ENCODE measurements at regions of chr9 and their contacts with region 1.

Region 1: GRCh38 chr9:133347985-133348717 is at the starts of genes MED22 and RPL7A:
- DNase-seq: peak; percentile 87 to 97
- ATAC-seq: peak; percentile 90 to 96 (median 93)
- H3K4me3 ChIP-seq: peak within 1 kb of the TSS; percentile 76
- H3K4me3 Mint-ChIP-seq: peak within 1 kb of the TSS; percentile 100
- H3K27ac ChIP-seq: peak within 1 kb of the TSS; percentile 75
- H3K27ac Mint-ChIP-seq: peak within 1 kb of the TSS; percentile 94 to 95
- H3K4me1 ChIP-seq: peaks cover 35% of the 10 kb centered on the region
- H3K4me1 Mint-ChIP-seq: peaks cover 42 to 44% of the 10 kb centered on the region in 2 donors
- H3K27me3 ChIP-seq: no peaks in the 10 kb centered on the region
- H3K27me3 Mint-ChIP-seq: no peaks in the 10 kb centered on the region
- CTCF ChIP-seq: no peak
- total RNA-seq, gene MED22: 23.8 to 37.0 (median 28.1) TPM
- total RNA-seq, gene RPL7A: 1,409 to 1,616 (median 1,600) TPM

Region 2: GRCh38 chr9:133335878-133336811 is 12.0 kb before region 1 on chr9 and contains the start of gene SURF6:
- intact Hi-C with region 1: loop called (anchors 1 kb)
- DNase-seq: peak; percentile 93 to 97
- ATAC-seq: peak; percentile 90 to 97 (median 92)
- H3K4me3 ChIP-seq: peak within 1 kb of the TSS; percentile 95
- H3K4me3 Mint-ChIP-seq: peak within 1 kb of the TSS; percentile 95
- H3K27ac ChIP-seq: peak within 1 kb of the TSS; percentile 77
- H3K27ac Mint-ChIP-seq: peak within 1 kb of the TSS; percentile 91 to 95
- H3K4me1 ChIP-seq: peaks cover 41% of the 10 kb centered on the region
- H3K4me1 Mint-ChIP-seq: peaks cover 39 to 53% of the 10 kb centered on the region in 2 donors
- H3K27me3 ChIP-seq: no peaks in the 10 kb centered on the region
- H3K27me3 Mint-ChIP-seq: no peaks in the 10 kb centered on the region
- CTCF ChIP-seq: no peak
- total RNA-seq, gene SURF6: 13.8 to 23.5 (median 21.3) TPM

Measured in natural killer cell (primary cell).